Cardiac septum (tissue), 1 donor: ENCODE measurements at regions of chr20 and their contacts with region 1.

Region 1: DNA sequence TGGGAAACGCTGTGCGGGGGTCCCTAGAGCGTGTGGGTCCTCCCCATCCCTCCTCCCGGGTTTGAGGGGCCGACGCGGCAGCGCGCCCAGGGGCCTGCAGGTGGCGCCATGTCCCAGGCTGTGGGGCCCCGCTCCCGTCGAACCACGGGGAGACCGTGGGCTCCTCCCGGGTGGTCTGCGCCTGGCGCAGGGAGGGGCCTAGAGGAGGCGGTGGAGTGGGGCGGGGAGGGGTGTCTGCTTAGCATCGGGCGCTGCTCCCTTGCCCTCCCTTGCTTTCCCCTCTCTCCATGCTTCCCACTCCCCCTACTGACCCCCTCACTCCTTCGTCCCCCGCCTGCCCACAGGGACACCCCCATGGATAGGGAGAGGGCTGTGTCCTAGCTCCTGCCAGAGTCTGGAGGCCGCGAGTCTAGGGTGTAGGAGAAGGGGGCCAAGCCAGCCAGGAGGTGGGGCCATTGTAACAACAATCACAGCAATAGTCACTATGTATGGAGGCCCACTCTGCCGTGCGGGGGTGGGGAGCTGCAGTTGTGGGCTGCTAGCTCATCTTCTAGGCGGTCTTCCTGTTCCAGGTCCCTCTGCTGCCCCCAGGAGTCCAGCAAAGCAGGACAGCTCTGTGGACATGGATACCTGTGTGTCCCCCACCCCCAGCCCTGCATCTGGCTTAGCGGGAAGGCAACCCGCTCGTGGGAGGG is 51.7 kb downstream of the CHMP4B start:
- DNase-seq: no peak

Region 2: DNA sequence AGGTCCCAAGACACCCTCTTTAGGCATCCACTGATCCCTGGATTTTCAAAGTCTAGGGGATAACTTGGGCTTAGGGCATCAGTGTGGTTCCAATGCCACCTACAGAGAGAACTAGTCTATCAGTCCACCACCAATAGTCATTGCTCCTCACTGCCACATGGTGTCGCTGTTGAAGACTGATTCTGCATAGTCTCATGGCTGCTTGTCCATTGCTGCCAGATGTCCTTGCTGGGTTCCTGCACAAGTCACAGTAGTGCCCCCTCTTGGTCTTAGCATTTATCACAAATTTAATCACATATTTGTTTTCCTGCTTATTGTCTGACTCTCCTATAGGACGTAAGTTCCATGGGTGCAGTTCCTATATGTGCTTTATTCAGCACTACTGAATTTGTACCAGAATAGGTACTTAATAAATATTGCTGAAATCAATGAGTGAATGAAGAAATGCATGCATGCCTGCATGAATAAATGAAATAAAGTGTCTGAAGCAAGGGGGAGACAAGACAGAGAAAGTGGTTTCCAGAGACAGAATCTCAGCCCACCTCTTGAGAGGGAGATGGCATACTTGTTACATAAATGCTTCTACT is 84.9 kb after region 1 on chr20:
- intact Hi-C with region 1: loop called (anchors 10 kb)
- DNase-seq: no peak